ENCODE measurements at regions of chr7 and their contacts with region 1.

Region 1: GRCh38 chr7:133512560-133512959 is 259.7 kb downstream of the EXOC4 start:
- DNase-seq: peak; percentile 94
- ATAC-seq: peak; percentile 98
- H3K4me3 ChIP-seq: peak overlapping the region; percentile 61
- H3K27ac ChIP-seq: peak overlapping the region; percentile 69
- H3K4me1 ChIP-seq: peaks cover 22% of the 10 kb centered on the region
- H3K27me3 ChIP-seq: no peaks in the 10 kb centered on the region
- CTCF ChIP-seq: no peak

Region 2: DNA sequence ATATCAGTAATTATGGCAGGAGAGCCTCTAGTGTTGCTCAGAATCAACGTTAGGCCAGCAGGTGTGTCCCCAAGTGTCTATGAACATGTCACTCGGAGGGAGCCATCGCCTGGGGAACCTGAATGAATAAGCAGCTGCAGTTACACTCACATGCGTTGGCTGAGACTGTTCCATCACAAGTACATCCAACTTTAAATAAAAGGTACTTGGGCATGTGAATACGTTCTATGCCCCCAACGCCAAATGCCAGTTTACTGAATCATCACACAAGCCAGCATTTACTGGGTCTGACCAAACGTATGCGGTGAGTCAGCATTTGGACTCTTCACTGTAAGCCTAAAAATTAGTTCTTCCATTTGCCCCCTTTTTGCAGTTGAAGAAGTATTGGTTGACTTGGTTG is 728.7 kb before region 1 on chr7:
- CTCF ChIA-PET with region 1: no interaction called
- POLR2A ChIA-PET with region 1: no interaction called
- intact Hi-C with region 1: loop called (anchors 5 kb)
- DNase-seq: peak; percentile 94
- ATAC-seq: peak; percentile 97
- H3K4me3 ChIP-seq: no peak overlapping the region
- H3K27ac ChIP-seq: peak overlapping the region; percentile 65
- H3K4me1 ChIP-seq: peaks cover 22% of the 10 kb centered on the region
- H3K27me3 ChIP-seq: no peaks in the 10 kb centered on the region
- CTCF ChIP-seq: no peak

Region 3: GRCh38 chr7:133255486-133255885 is 257.1 kb before region 1 on chr7:
- CTCF ChIA-PET with region 1: no interaction called
- POLR2A ChIA-PET with region 1: no interaction called
- intact Hi-C with region 1: no loop called
- DNase-seq: no peak
- ATAC-seq: no peak
- H3K4me3 ChIP-seq: no peak overlapping the region
- H3K27ac ChIP-seq: no peak overlapping the region
- H3K4me1 ChIP-seq: peaks cover 12% of the 10 kb centered on the region; the same call in 1 of the 2 replicates
- H3K27me3 ChIP-seq: no peaks in the 10 kb centered on the region
- CTCF ChIP-seq: no peak

Region 4: DNA sequence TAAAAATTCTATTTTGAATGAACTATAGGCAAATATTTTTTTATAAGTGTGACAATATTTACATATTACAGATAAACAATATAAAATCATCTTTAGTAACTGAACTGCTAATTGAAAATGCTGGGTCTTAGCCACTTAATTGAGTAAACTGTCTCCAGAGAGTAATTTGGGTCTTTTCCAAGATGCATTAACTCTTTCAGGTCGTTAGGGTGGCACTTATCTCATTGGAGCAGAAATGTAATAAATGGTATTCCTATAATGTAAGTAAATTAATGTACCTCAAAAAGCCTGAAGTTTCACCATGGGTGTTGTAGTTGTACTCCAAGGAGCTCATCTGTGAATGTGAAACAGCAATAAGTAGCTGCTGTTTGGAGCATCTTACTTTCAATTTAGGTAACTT is 51.1 kb before region 1 on chr7:
- CTCF ChIA-PET with region 1: no interaction called
- POLR2A ChIA-PET with region 1: no interaction called
- intact Hi-C with region 1: no loop called
- DNase-seq: no peak
- ATAC-seq: no peak
- H3K4me3 ChIP-seq: no peak overlapping the region
- H3K27ac ChIP-seq: no peak overlapping the region
- H3K4me1 ChIP-seq: no peaks in the 10 kb centered on the region
- H3K27me3 ChIP-seq: no peaks in the 10 kb centered on the region
- CTCF ChIP-seq: no peak

Region 5: GRCh38 chr7:133571076-133571475 is 58.5 kb after region 1 on chr7:
- CTCF ChIA-PET with region 1: interaction called, 3 read pairs
- POLR2A ChIA-PET with region 1: no interaction called
- intact Hi-C with region 1: loop called (anchors 5 kb)
- DNase-seq: no peak
- ATAC-seq: no peak
- H3K4me3 ChIP-seq: no peak overlapping the region
- H3K27ac ChIP-seq: no peak overlapping the region
- H3K4me1 ChIP-seq: peaks cover 34% of the 10 kb centered on the region
- H3K27me3 ChIP-seq: no peaks in the 10 kb centered on the region
- CTCF ChIP-seq: no peak

Region 6: GRCh38 chr7:133645884-133646391 is 133.4 kb after region 1 on chr7:
- CTCF ChIA-PET with region 1: no interaction called
- POLR2A ChIA-PET with region 1: no interaction called
- intact Hi-C with region 1: loop called (anchors 10 kb)
- DNase-seq: peak; percentile 17
- ATAC-seq: peak; percentile 53
- H3K4me3 ChIP-seq: no peak overlapping the region
- H3K27ac ChIP-seq: no peak overlapping the region
- H3K4me1 ChIP-seq: peaks cover 3% of the 10 kb centered on the region; the same call in 1 of the 2 replicates
- H3K27me3 ChIP-seq: no peaks in the 10 kb centered on the region
- CTCF ChIP-seq: no peak

Region 7: DNA sequence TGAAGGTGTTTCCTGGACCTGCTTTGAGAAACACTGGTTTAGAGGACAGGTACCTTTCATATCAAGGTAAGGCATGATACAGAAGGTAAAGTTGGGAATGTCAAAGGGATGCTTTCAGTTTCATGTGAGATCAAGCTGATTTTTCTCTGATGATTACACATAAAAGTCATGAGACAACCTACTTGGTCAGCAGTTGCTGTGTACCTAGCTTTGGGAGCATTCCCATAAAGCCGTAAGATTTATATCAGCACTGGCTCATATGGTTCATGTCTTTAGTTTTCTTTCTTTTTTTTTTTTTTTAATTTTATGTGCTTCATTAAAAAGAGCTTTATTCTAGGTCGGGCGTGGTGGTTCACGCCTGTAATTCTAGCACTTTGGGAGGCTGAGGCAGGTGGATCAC is 349.3 kb after region 1 on chr7:
- CTCF ChIA-PET with region 1: no interaction called
- POLR2A ChIA-PET with region 1: interaction called, 13 read pairs
- intact Hi-C with region 1: no loop called
- DNase-seq: peak; percentile 13
- ATAC-seq: peak; percentile 33; the same call in 1 of the 2 replicates
- H3K4me3 ChIP-seq: no peak overlapping the region
- H3K27ac ChIP-seq: no peak overlapping the region
- H3K4me1 ChIP-seq: no peaks in the 10 kb centered on the region
- H3K27me3 ChIP-seq: no peaks in the 10 kb centered on the region
- CTCF ChIP-seq: no peak